Heart left ventricle (tissue), 16 donors: ENCODE measurements at regions of chr11 and their contacts with region 1.

Region 1: GRCh38 chr11:65040847-65041621 is at the start of gene SAC3D1:
- DNase-seq: peak; percentile 89 to 94 (median 93)
- ATAC-seq: peak; percentile 91 to 97 (median 96)
- H3K4me3 ChIP-seq: peak within 1 kb of the TSS; percentile 63 to 92 (median 78)
- H3K27ac ChIP-seq: peak within 1 kb of the TSS; percentile 86 to 98 (median 94)
- H3K4me1 ChIP-seq: peaks cover 0 to 37% (median 16%) of the 10 kb centered on the region in 12 donors
- H3K27me3 ChIP-seq: no peaks in the 10 kb centered on the region
- CTCF ChIP-seq: no peak
- POLR2A ChIP-seq: peak in 1 of 2 donors; percentile 55
- total RNA-seq, gene SAC3D1: 4.3 to 9.1 (median 6.2) TPM

Region 2: DNA sequence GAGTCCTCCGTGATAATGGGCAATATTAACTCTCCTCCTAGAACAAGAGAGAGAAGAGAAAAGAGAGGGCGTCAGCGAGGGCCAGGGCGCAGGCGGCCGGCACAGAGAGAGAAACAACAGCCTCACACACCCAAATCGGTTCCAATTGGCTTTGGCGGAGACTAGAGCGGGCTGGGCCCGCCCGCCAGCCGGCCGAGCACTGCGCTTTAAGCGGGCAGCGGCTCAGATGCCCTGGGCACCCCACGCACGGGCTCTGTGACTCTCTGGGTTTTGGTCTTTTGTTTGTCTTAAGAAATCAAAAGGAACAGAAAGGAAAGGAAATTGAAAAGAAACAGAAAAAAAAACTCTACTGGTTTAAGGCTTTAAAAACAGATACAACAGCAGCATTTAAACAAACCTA is 433.0 kb before region 1 on chr11:
- intact Hi-C with region 1: no loop called
- DNase-seq: peak in 2 of 5 donors; percentile 55 to 58
- ATAC-seq: peak; percentile 35 to 73 (median 50)
- H3K4me3 ChIP-seq: peak overlapping the region in 9 of 12 donors; percentile 5 to 43 (median 32)
- H3K27ac ChIP-seq: peak overlapping the region in 2 of 12 donors; percentile 13 to 47
- H3K4me1 ChIP-seq: peaks cover 0 to 12% (median 0%) of the 10 kb centered on the region in 12 donors
- H3K27me3 ChIP-seq: peaks cover 0 to 22% (median 7%) of the 10 kb centered on the region in 9 donors
- CTCF ChIP-seq: no peak
- POLR2A ChIP-seq: no peak

Region 3: GRCh38 chr11:65027213-65028067 is 13.6 kb before region 1 on chr11 and contains the start of gene SNX15:
- intact Hi-C with region 1: loop called in 1 of 10 experiments (anchors 1 kb)
- DNase-seq: peak; percentile 94 to 95 (median 95)
- ATAC-seq: peak; percentile 96 to 99 (median 98)
- H3K4me3 ChIP-seq: peak within 1 kb of the TSS; percentile 18 to 74 (median 69)
- H3K27ac ChIP-seq: peak within 1 kb of the TSS; percentile 53 to 96 (median 92)
- H3K4me1 ChIP-seq: peaks cover 0 to 18% (median 10%) of the 10 kb centered on the region in 12 donors
- H3K27me3 ChIP-seq: no peaks in the 10 kb centered on the region
- CTCF ChIP-seq: peak; percentile 70 to 92 (median 86)
- POLR2A ChIP-seq: peak in 1 of 2 donors; percentile 82
- total RNA-seq, gene SNX15: 12.7 to 33.0 (median 17.9) TPM

Region 4: DNA sequence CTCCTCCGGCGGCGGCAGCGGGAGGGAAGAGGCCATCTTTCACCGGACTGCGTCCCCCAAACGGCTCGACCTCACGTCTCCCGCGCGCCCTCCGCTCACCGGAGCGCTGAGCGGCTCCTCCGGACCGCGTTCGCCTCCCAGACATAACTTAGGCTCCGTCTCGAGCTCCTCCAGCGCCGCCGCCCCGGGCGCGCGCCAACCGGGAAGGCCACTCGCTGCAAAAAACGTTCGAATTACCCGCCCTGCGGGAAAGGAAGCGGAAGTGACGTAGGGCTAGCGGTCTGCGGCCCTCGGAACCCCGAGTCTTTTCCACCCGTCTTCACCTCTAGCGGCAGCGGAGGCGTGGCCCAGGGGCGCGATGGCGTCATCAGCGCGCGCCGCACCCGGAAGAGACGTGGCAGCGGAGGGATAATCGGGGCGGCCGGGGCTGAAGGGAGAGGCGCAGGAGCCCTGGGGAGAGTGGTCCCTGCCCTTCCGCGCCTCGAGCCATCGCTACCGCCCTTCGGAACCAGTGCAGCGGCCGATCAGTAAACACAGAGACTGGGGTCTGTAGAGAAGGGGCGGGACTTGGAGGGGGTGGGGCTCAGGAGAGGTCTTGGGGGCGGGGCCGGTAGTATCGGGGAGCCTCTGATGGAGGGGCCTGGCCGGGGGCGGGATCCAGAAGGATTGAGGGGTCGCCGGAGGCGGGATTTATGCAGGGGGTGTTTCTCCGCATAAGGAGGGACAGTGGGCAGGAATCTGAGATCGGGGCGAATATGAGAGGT is 43.0 kb after region 1 on chr11 and contains the starts of genes CDCA5 and ZFPL1:
- intact Hi-C with region 1: loop called in 5 of 10 experiments (anchors 2 to 5 kb)
- DNase-seq: peak; percentile 95 to 96 (median 95)
- ATAC-seq: peak; percentile 90 to 98 (median 97)
- H3K4me3 ChIP-seq: peak within 1 kb of the TSS; percentile 44 to 93 (median 79)
- H3K27ac ChIP-seq: peak within 1 kb of the TSS; percentile 45 to 95 (median 90)
- H3K4me1 ChIP-seq: peaks cover 4 to 27% (median 16%) of the 10 kb centered on the region in 12 donors
- H3K27me3 ChIP-seq: no peaks in the 10 kb centered on the region
- CTCF ChIP-seq: no peak
- POLR2A ChIP-seq: peak in 1 of 2 donors; percentile 58
- total RNA-seq, gene CDCA5: 0.42 to 11.6 (median 0.81) TPM
- total RNA-seq, gene ZFPL1: 19.6 to 42.8 (median 25.0) TPM

Region 5: DNA sequence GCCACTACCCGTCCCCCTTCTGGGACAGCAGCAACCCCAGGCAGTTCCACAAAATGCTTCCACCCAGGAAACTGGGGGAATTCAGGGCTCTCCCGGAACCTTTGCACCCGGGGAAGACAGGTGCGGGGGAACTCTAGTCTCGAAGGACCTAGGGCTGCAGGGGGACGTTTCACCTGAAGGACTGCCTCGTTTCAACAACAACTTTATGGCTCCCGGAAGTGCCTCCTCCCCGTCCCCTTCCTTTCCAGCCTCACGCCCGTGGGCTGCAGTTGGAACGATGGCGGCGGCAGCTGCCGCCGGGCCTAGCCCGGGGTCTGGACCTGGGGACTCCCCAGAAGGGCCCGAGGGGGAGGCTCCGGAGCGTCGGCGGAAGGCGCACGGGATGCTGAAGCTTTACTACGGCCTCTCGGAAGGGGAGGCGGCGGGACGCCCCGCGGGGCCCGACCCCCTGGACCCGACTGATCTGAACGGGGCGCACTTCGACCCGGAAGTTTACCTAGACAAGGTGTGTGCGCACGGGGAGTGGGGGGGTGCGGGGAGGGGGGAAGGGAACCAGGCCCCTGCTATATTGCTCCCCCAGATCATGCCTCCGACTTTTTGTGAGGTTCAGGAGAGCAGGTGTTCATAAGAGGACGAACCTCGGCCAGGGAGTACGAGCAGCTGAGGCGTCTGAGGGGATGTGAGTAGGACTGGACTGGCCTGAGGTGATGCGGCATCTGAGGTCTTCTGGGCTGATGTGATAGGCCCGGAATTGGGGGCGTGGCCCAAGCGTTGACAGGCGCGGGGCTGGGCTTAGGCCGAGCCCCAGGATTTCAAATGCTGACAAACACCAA is 55.2 kb after region 1 on chr11 and contains the start of gene VPS51:
- intact Hi-C with region 1: loop called in 1 of 10 experiments (anchors 5 kb)
- DNase-seq: peak; percentile 88 to 92 (median 90)
- ATAC-seq: peak; percentile 92 to 96 (median 95)
- H3K4me3 ChIP-seq: peak within 1 kb of the TSS; percentile 59 to 91 (median 85)
- H3K27ac ChIP-seq: peak within 1 kb of the TSS; percentile 52 to 96 (median 92)
- H3K4me1 ChIP-seq: peaks cover 0 to 25% (median 15%) of the 10 kb centered on the region in 12 donors
- H3K27me3 ChIP-seq: no peaks in the 10 kb centered on the region
- CTCF ChIP-seq: no peak
- POLR2A ChIP-seq: peak in 1 of 2 donors; percentile 47
- total RNA-seq, gene VPS51: 78.4 to 165 (median 106) TPM

Region 6: DNA sequence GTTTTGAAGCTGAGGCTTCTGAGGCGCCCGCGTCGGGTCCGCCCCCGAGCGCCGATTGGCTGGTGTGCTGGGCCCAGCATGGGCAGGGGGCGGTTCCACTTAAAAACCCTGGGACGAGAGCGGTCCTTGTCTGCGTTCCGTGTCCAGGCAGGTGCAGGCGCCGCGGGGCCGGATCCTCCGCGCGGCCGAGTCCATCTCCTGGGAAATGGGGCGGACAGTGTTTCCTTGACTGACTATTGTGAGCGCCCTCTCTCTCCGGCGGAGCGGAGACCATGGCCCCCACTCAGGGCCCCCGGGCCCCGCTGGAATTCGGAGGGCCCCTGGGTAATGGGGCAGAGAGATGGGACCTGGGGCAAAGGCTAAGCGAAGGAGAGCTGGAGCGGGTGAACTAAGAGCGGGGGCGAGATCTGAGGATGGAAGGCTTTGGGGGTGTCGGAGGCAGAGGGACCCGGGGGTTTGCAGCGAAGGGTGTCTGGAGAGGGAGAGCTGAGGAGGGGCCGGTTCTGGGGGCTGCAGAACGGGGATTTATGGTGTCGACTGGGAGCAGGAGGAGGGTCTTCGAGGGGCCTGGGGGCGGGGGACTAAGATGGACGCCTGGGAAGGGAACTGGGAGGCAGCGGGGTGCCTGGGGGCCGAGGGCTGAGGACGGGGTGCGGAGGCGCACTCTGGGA is 70.8 kb after region 1 on chr11 and contains the start of gene TM7SF2:
- intact Hi-C with region 1: loop called in 1 of 10 experiments (anchors 2 kb)
- DNase-seq: peak; percentile 96 to 98 (median 97)
- ATAC-seq: peak; percentile 85 to 93 (median 86)
- H3K4me3 ChIP-seq: peak within 1 kb of the TSS; percentile 38 to 90 (median 61)
- H3K27ac ChIP-seq: peak within 1 kb of the TSS in 11 of 12 donors; percentile 52 to 86 (median 79)
- H3K4me1 ChIP-seq: peaks cover 0 to 62% (median 43%) of the 10 kb centered on the region in 12 donors
- H3K27me3 ChIP-seq: peaks cover 0 to 5% (median 0%) of the 10 kb centered on the region in 9 donors
- CTCF ChIP-seq: no peak
- POLR2A ChIP-seq: peak; percentile 73 to 96
- total RNA-seq, gene TM7SF2: 25.1 to 752 (median 78.6) TPM